ENCODE measurements at regions of chr7 and their contacts with region 1.

Region 1: DNA sequence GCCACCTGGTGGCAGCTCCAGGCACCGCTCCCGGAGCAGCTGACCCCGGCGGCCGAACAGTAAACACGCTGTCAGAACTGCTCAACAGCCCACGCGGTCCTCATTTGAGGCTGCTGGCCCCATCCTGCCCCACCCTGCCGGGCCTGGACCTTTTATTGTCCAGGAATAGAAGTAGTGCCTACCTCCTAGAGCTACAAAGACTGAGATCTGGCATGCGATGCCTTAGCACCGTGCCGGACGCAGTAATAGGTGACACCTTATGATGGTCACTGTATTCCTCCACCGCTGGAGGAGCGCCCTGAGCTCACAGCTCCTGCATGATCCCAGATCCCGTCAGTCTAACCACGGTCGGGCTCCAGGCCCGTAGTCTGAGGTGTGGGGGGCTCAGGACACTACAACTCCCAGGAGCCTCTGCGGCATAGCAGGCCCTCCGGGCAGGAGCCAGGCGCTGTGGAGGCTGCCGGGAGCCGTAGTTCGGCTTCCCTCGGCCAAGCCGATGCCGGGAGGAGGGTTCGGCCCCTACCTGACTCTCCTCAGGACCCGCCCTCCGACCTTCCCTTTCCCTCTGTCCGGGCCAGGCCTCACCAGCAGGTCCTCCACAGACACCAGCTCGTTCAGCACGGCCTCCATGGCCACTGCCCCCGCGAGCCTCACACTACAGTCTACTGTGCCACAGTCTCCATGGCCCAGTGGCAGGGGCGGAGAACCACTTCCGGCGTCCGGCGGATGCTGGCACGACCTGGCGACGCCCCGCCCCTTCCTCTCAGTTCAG is at the start of gene FIS1:
- DNase-seq: peak; percentile 94
- H3K4me3 ChIP-seq: peak within 1 kb of the TSS; percentile 86
- H3K27ac ChIP-seq: peak within 1 kb of the TSS; percentile 87
- H3K4me1 ChIP-seq: no peaks in the 10 kb centered on the region
- H3K27me3 ChIP-seq: no peaks in the 10 kb centered on the region
- CTCF ChIP-seq: peak; percentile 92
- total RNA-seq, gene FIS1: 74.1 and 79.6 TPM in 2 replicates

Region 2: GRCh38 chr7:101087324-101088068 is 157.1 kb before region 1 on chr7:
- CTCF ChIA-PET with region 1: no interaction called
- POLR2A ChIA-PET with region 1: no interaction called
- intact Hi-C with region 1: no loop called
- DNase-seq: no peak
- H3K4me3 ChIP-seq: no peak overlapping the region
- H3K27ac ChIP-seq: no peak overlapping the region
- H3K4me1 ChIP-seq: peaks cover 11% of the 10 kb centered on the region
- H3K27me3 ChIP-seq: no peaks in the 10 kb centered on the region
- CTCF ChIP-seq: no peak

Region 3: GRCh38 chr7:101099969-101100781 is 144.4 kb before region 1 on chr7:
- CTCF ChIA-PET with region 1: no interaction called
- POLR2A ChIA-PET with region 1: no interaction called
- intact Hi-C with region 1: no loop called
- DNase-seq: peak; percentile 96
- H3K4me3 ChIP-seq: no peak overlapping the region
- H3K27ac ChIP-seq: peak overlapping the region; percentile 65
- H3K4me1 ChIP-seq: peaks cover 20% of the 10 kb centered on the region
- H3K27me3 ChIP-seq: no peaks in the 10 kb centered on the region
- CTCF ChIP-seq: no peak

Region 4: GRCh38 chr7:101206665-101207042 is 37.9 kb before region 1 on chr7:
- CTCF ChIA-PET with region 1: no interaction called
- POLR2A ChIA-PET with region 1: no interaction called
- intact Hi-C with region 1: no loop called
- DNase-seq: no peak
- H3K4me3 ChIP-seq: no peak overlapping the region
- H3K27ac ChIP-seq: no peak overlapping the region
- H3K4me1 ChIP-seq: no peaks in the 10 kb centered on the region
- H3K27me3 ChIP-seq: no peaks in the 10 kb centered on the region
- CTCF ChIP-seq: no peak

Region 5: GRCh38 chr7:101217388-101218235 is 26.9 kb before region 1 on chr7 and contains the starts of genes PLOD3 and ZNHIT1:
- CTCF ChIA-PET with region 1: interaction called, 4 read pairs
- POLR2A ChIA-PET with region 1: no interaction called
- intact Hi-C with region 1: loop called (anchors 2 kb)
- DNase-seq: peak; percentile 99
- H3K4me3 ChIP-seq: peak within 1 kb of the TSS; percentile 68
- H3K27ac ChIP-seq: peak within 1 kb of the TSS; percentile 78
- H3K4me1 ChIP-seq: peaks cover 25% of the 10 kb centered on the region
- H3K27me3 ChIP-seq: no peaks in the 10 kb centered on the region
- CTCF ChIP-seq: no peak
- total RNA-seq, gene PLOD3: 77.0 and 84.1 TPM in 2 replicates
- total RNA-seq, gene ZNHIT1: 64.4 and 65.1 TPM in 2 replicates